MCF 10A (cell line): ENCODE measurements at regions of chr17 and their contacts with region 1.

Region 1: DNA sequence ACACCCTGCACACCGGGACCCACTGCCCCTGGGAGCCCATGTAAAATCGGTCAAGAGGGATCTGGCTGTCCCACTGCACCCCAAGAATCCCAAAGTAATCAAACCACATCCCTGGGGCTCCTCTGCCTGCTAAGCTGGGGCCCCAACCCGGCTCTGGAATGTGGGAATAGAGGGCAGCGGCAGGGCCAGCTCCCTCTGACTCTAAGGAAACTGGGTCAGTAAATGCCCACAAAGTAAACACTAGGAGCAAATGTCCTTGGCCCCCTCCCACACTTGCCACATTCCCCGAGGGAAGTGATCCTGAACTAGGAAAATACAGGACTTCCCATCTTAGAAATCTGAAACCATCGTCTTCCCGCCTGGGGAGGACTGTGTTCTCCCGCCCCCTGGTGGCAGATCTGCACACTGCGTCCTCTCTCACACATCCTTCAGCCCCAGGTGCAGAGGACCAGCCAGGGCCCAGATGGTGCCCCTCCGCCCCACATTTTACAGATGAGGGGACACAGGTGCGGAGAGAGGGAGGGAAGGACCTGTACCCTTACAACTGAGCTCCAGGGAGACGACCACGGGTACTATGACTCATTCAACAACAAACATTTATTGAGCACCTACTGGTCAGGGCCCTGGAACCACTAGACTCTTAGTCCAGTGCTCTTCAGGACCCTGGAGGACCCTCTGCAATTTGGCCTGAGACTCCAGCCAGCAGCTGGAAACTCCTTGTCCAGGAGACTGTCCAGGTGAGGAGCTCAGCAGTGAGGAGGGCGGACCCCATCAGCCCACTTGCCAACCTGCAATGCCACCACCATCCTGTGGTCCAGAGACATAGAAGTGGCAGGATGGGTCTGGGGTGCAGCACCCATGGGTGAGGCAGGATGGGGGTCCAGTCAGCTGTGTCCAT is 10.1 kb downstream of the P3H4 start:
- DNase-seq: peak; percentile 91
- H3K4me3 Mint-ChIP-seq: peak overlapping the region; percentile 56
- H3K27ac Mint-ChIP-seq: peak overlapping the region; percentile 89
- H3K4me1 Mint-ChIP-seq: peaks cover 22% of the 10 kb centered on the region
- H3K27me3 Mint-ChIP-seq: no peaks in the 10 kb centered on the region
- CTCF ChIP-seq: peak; percentile 95

Region 2: DNA sequence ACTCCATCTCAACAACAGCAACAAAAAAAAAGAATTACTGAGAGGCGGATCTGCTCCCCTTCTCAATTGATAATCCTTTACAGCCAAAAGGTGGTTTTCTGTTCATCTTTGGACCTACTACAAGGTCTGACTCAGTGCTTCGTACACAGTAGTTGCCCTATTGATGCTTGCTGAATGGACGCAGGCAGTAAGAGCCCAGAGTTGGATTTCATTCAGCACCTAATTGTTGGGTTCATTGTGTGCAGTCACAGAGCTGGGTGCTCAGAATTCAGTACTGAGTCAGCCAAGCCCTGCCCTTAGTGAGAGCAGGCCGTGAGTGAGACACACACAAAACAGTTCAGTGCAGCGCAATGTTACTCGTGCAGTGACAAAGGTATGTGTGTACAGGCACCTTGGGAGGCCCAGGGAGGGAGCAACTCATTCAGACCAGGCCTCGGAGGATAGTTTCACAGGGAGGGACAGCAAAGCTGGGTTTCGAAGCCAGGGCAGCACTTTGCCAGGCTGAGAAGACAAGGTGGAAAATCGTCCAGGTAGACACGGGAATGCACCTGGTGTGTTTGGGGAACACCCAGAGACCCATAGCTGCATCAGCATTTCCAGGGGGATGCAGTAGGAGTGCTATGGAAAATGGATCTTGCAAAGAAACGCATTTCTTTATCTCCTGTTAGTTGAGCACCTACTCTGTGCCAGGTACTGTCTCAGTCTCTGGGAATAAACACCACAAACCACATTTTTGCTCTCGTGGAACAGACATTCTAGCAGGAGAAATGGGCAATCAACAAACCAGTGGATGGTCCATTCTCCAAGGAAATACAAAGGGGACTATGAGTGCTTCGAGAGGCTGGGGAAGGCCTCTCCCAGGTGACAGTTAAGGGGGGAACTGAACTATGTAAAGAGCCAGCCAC is 159.1 kb before region 1 on chr17:
- CTCF ChIA-PET with region 1: no interaction called
- POLR2A ChIA-PET with region 1: no interaction called
- intact Hi-C with region 1: no loop called
- DNase-seq: no peak
- H3K4me3 Mint-ChIP-seq: no peak overlapping the region
- H3K27ac Mint-ChIP-seq: peak overlapping the region; percentile 51
- H3K4me1 Mint-ChIP-seq: peaks cover 15% of the 10 kb centered on the region
- H3K27me3 Mint-ChIP-seq: no peaks in the 10 kb centered on the region
- CTCF ChIP-seq: no peak

Region 3: GRCh38 chr17:41750862-41751261 is 50.8 kb before region 1 on chr17:
- CTCF ChIA-PET with region 1: interaction called, 16 read pairs
- POLR2A ChIA-PET with region 1: interaction called, 9 read pairs
- intact Hi-C with region 1: no loop called
- DNase-seq: no peak
- H3K4me3 Mint-ChIP-seq: no peak overlapping the region
- H3K27ac Mint-ChIP-seq: no peak overlapping the region
- H3K4me1 Mint-ChIP-seq: no peaks in the 10 kb centered on the region
- H3K27me3 Mint-ChIP-seq: no peaks in the 10 kb centered on the region
- CTCF ChIP-seq: no peak

Region 4: DNA sequence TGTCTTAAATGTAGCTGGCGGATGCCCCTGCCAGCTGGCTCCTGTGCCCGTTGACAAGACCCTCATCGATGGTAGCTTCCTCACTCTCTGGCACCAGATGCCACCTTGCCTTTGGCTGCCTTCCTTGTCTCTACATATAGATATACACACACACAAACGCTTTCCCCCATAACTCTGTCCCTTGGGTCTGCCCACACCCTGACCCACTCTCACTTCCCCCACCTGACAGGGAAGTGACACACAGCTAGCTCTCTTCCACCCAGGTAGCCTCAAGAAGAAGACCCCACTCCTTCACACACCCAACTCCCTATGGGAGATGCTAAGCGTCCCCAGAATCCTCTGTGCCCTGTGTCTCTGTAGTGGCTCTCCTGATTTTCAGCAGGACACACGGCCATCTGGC is 40.7 kb before region 1 on chr17:
- CTCF ChIA-PET with region 1: interaction called, 11 read pairs
- POLR2A ChIA-PET with region 1: interaction called, 5 read pairs
- intact Hi-C with region 1: no loop called
- DNase-seq: no peak
- H3K4me3 Mint-ChIP-seq: no peak overlapping the region
- H3K27ac Mint-ChIP-seq: no peak overlapping the region
- H3K4me1 Mint-ChIP-seq: no peaks in the 10 kb centered on the region
- H3K27me3 Mint-ChIP-seq: no peaks in the 10 kb centered on the region
- CTCF ChIP-seq: no peak

Region 5: GRCh38 chr17:41777574-41778188 is 23.9 kb before region 1 on chr17:
- CTCF ChIA-PET with region 1: interaction called, 29 read pairs
- POLR2A ChIA-PET with region 1: interaction called, 599 read pairs
- intact Hi-C with region 1: loop called (anchors 2 kb)
- DNase-seq: peak; percentile 92
- H3K4me3 Mint-ChIP-seq: no peak overlapping the region
- H3K27ac Mint-ChIP-seq: peak overlapping the region; percentile 71
- H3K4me1 Mint-ChIP-seq: peaks cover 33% of the 10 kb centered on the region
- H3K27me3 Mint-ChIP-seq: no peaks in the 10 kb centered on the region
- CTCF ChIP-seq: no peak

Region 6: DNA sequence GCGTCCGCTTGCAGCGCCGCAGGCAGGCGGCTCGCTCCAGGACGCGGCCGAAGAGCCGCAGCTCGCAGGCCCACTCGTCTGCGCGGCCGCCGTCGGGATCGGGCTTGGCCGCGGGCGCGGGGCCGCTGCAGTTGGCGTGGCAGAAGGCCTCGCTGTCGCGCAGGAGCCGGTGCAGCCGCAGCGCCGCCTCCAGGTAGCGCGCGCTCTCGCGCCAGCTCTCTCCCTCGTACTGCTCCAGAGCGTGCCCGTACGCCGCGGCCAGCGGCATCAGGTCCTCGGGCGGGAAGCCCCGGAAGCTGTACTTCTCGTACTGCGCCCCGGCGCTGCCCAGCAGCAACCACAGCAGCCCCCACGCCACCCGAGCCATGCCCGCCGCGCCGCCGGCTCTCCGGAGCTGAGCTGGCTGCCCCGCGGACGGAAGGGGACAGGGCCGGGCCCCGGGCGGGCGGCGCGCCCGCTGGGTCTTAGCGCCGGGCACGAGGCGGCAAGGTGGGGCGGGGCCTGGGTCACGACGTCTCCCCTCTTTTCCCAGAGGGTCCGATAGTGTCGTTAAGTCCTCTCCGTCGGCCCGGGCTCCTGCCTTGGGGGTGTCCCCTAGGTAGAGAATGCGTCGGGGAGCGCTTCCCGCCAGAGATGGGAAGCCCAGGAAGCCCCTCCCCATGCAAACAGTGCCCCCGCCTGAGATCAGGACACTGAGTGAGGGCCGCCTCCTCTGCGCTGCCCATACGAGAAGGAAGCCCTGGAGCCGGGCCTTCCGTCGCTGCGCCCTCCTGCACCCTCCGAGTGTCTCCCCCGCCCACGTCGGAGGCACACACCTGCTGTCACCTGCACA is 10.1 kb after region 1 on chr17 and contains the start of gene P3H4:
- CTCF ChIA-PET with region 1: interaction called, 22 read pairs
- POLR2A ChIA-PET with region 1: interaction called, 29 read pairs
- intact Hi-C with region 1: no loop called
- DNase-seq: peak; percentile 74
- H3K4me3 Mint-ChIP-seq: peak within 1 kb of the TSS; percentile 95
- H3K27ac Mint-ChIP-seq: peak within 1 kb of the TSS; percentile 85
- H3K4me1 Mint-ChIP-seq: peaks cover 19% of the 10 kb centered on the region
- H3K27me3 Mint-ChIP-seq: no peaks in the 10 kb centered on the region
- CTCF ChIP-seq: peak; percentile 52
- total RNA-seq, gene P3H4: 36.4 and 41.5 TPM in 2 replicates

Region 7: GRCh38 chr17:41885733-41886132 is 84.1 kb after region 1 on chr17:
- CTCF ChIA-PET with region 1: no interaction called
- POLR2A ChIA-PET with region 1: no interaction called
- intact Hi-C with region 1: no loop called
- DNase-seq: no peak
- H3K4me3 Mint-ChIP-seq: no peak overlapping the region
- H3K27ac Mint-ChIP-seq: no peak overlapping the region
- H3K4me1 Mint-ChIP-seq: no peaks in the 10 kb centered on the region
- H3K27me3 Mint-ChIP-seq: no peaks in the 10 kb centered on the region
- CTCF ChIP-seq: peak; percentile 25